ENCODE measurements at regions of chr22 and their contacts with region 1.

Region 1: DNA sequence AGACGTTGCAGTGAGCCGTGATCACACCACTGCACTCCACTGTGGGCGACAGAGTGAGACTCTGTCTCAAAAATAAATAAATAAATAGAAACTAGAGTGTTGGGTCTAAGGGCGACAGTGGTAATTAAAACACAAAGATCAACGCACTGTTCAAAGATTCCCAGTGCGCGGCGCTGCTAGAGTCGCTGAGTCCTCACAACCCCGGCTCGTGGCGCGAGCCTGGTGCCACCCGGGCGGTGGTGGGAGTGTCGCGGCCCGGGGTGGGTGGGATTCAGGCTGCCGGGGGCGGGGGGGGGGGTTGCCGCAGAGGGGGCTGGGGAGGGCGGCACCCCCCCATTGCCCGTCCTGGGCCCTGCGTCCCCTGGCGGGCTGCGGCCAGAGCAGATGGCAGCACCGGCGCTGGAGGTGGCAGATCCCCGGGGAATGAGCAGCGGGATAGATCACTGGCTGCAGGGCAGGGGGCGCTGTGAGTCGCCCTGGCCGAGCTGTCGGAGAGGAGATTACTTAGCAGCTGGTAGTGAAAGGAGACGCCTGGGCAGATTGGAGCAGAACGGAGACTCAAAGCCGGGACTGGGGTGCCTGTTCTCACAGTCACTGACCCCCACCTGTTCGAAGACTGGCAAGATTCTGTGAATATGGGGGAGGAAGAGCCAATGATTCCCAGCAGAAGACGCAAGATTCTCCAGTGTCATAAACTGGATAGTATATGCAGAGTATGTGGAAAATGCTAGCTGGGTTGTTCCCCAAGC is 30.2 kb upstream of the APOBEC3A start:
- DNase-seq: peak; percentile 91
- H3K4me3 ChIP-seq: peak overlapping the region in 5 of 8 donors; percentile 17 to 60 (median 24)
- H3K27ac ChIP-seq: peak overlapping the region in 1 of 8 donors; percentile 55
- H3K4me1 ChIP-seq: peaks cover 0 to 32% (median 17%) of the 10 kb centered on the region in 6 donors
- H3K27me3 ChIP-seq: peaks cover 0 to 71% (median 4%) of the 10 kb centered on the region in 7 donors
- CTCF ChIP-seq: peak in 9 of 11 experiments; percentile 21 to 81 (median 69)
- POLR2A ChIP-seq: no peak

Region 2: GRCh38 chr22:38820020-38820419 is 107.2 kb before region 1 on chr22:
- intact Hi-C with region 1: no loop called
- DNase-seq: no peak
- H3K4me3 ChIP-seq: no peak overlapping the region
- H3K27ac ChIP-seq: no peak overlapping the region
- H3K4me1 ChIP-seq: no peaks in the 10 kb centered on the region
- H3K27me3 ChIP-seq: peaks cover 0 to 8% (median 0%) of the 10 kb centered on the region in 7 donors
- CTCF ChIP-seq: no peak
- POLR2A ChIP-seq: no peak

Region 3: GRCh38 chr22:38850941-38851849 is 76.0 kb before region 1 on chr22:
- intact Hi-C with region 1: no loop called
- DNase-seq: no peak
- H3K4me3 ChIP-seq: no peak overlapping the region
- H3K27ac ChIP-seq: no peak overlapping the region
- H3K4me1 ChIP-seq: no peaks in the 10 kb centered on the region
- H3K27me3 ChIP-seq: peaks cover 0 to 14% (median 0%) of the 10 kb centered on the region in 7 donors
- CTCF ChIP-seq: no peak
- POLR2A ChIP-seq: no peak

Region 4: GRCh38 chr22:39123751-39124601 is 196.8 kb after region 1 on chr22:
- intact Hi-C with region 1: loop called (anchors 5 kb)
- DNase-seq: peak; percentile 74
- H3K4me3 ChIP-seq: no peak overlapping the region
- H3K27ac ChIP-seq: no peak overlapping the region
- H3K4me1 ChIP-seq: peaks cover 0 to 20% (median 8%) of the 10 kb centered on the region in 6 donors
- H3K27me3 ChIP-seq: no peaks in the 10 kb centered on the region
- CTCF ChIP-seq: no peak
- POLR2A ChIP-seq: no peak

Region 5: GRCh38 chr22:39236321-39237317 is 309.4 kb after region 1 on chr22:
- intact Hi-C with region 1: no loop called
- DNase-seq: no peak
- H3K4me3 ChIP-seq: peak overlapping the region in 1 of 8 donors; percentile 0
- H3K27ac ChIP-seq: peak overlapping the region in 2 of 8 donors; percentile 15 to 63
- H3K4me1 ChIP-seq: peaks cover 45 to 89% (median 64%) of the 10 kb centered on the region in 6 donors
- H3K27me3 ChIP-seq: peaks cover 0 to 97% (median 32%) of the 10 kb centered on the region in 7 donors
- CTCF ChIP-seq: no peak
- POLR2A ChIP-seq: no peak

Measured in spleen (tissue), 13 donors.